Right lobe of liver (tissue), 6 donors: ENCODE measurements at regions of chr9 and their contacts with region 1.

Region 1: GRCh38 chr9:128635283-128636023 is 21.2 kb downstream of the DYNC2I2 start:
- DNase-seq: peak; percentile 91 to 93 (median 91)
- ATAC-seq: peak; percentile 84 to 86 (median 85)
- H3K4me3 ChIP-seq: peak overlapping the region; percentile 42 to 54 (median 46)
- H3K27ac ChIP-seq: peak overlapping the region; percentile 48 to 80 (median 52)
- H3K4me1 ChIP-seq: peaks cover 0 to 12% (median 3%) of the 10 kb centered on the region in 4 donors
- H3K27me3 ChIP-seq: no peaks in the 10 kb centered on the region
- CTCF ChIP-seq: peak; percentile 62 to 72 (median 65)
- POLR2A ChIP-seq: no peak

Region 2: GRCh38 chr9:128438343-128439109 is 196.9 kb before region 1 on chr9:
- intact Hi-C with region 1: loop called in 1 of 2 experiments (anchors 10 kb)
- DNase-seq: peak; percentile 88 to 90 (median 89)
- ATAC-seq: peak; percentile 94 to 99 (median 98)
- H3K4me3 ChIP-seq: no peak overlapping the region
- H3K27ac ChIP-seq: no peak overlapping the region
- H3K4me1 ChIP-seq: no peaks in the 10 kb centered on the region
- H3K27me3 ChIP-seq: no peaks in the 10 kb centered on the region
- CTCF ChIP-seq: peak; percentile 90 to 97 (median 94)
- POLR2A ChIP-seq: no peak

Region 3: DNA sequence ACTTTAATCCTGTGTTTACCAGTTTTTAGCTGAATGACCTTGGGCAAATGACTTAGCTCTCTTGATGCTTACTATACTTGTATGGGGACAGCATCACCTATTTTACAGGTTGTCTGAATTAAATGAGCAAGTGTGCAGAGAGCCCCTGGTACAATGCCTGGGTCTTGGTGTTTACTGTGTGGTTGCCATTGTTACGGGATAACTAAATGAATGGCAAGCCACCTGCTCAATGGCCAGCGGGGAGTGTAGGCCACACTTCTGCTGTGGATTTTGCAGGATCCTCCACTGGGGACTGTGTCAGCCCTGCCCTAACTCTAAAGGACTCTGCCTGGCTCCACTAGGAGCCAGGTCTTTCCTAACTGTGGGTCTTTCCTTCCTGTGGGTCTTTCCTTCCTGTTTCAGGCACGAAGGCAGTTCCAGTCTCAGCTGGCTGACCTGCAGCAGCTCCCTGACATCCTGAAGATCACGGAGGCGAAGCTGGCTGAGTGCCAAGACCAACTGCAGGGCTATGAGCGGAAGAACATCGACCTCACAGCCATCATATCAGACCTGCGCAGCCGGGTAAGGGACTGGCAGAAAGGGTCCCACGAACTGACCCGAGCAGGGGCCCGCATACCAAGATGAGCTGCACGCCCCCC is 141.2 kb before region 1 on chr9:
- intact Hi-C with region 1: loop called in 1 of 2 experiments (anchors 10 kb)
- DNase-seq: peak; percentile 81 to 89 (median 87)
- ATAC-seq: peak; percentile 59 to 74 (median 70)
- H3K4me3 ChIP-seq: no peak overlapping the region
- H3K27ac ChIP-seq: peak overlapping the region in 1 of 3 donors; percentile 41
- H3K4me1 ChIP-seq: peaks cover 0 to 28% (median 16%) of the 10 kb centered on the region in 4 donors
- H3K27me3 ChIP-seq: no peaks in the 10 kb centered on the region
- CTCF ChIP-seq: no peak
- POLR2A ChIP-seq: no peak